Thyroid gland (tissue), 4 donors: ENCODE measurements at regions of chr9 and their contacts with region 1.

Region 1: GRCh38 chr9:78261403-78262001 is 25.6 kb downstream of the CEP78 start:
- DNase-seq: no peak
- H3K4me3 ChIP-seq: no peak overlapping the region
- H3K27ac ChIP-seq: no peak overlapping the region
- H3K4me1 ChIP-seq: peaks cover 3 to 8% of the 10 kb centered on the region in 2 donors
- H3K27me3 ChIP-seq: no peaks in the 10 kb centered on the region
- CTCF ChIP-seq: peak in 5 of 6 experiments; percentile 27 to 81 (median 60)
- POLR2A ChIP-seq: no peak

Region 2: DNA sequence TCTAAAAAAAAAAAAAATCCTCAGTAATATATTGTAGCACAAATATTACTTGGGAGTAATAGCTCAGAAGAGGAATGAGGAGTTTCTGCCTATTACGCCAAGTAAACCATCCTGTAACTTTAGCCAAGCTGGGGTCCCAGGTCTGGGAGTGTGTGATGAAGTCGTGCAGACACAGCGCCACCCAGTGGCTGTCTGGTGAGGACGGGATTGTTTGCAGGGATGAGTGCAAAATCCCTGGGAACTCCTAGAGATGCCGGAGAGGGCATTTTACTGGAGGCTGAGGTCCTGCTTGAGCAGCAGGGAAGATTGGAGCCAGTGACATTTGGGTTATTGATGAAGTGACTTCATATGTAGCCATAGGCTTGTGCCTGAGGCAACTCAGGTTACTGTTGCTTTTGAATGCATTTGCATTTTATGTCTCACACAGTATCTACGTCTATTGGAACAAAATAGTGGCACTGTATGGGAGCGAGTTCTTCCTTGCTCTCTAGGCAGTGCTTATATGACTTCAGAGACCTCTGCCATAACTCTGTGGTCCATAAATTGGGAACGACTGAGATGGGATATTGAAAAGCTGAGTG is 108.2 kb after region 1 on chr9:
- intact Hi-C with region 1: loop called (anchors 5 kb)
- DNase-seq: peak; percentile 71 to 77
- H3K4me3 ChIP-seq: no peak overlapping the region
- H3K27ac ChIP-seq: no peak overlapping the region
- H3K4me1 ChIP-seq: no peaks in the 10 kb centered on the region
- H3K27me3 ChIP-seq: no peaks in the 10 kb centered on the region
- CTCF ChIP-seq: peak; percentile 42 to 73 (median 55)
- POLR2A ChIP-seq: no peak